ENCODE measurements at regions of chr3 and their contacts with region 1.

Region 1: GRCh38 chr3:32781210-32781968 is 36.4 kb upstream of the TRIM71 start:
- DNase-seq: peak; percentile 91
- ATAC-seq: peak; percentile 90
- H3K4me3 ChIP-seq: peak overlapping the region; percentile 75
- H3K27ac ChIP-seq: peak overlapping the region; percentile 35
- H3K4me1 ChIP-seq: peaks cover 5% of the 10 kb centered on the region
- H3K27me3 ChIP-seq: no peaks in the 10 kb centered on the region
- CTCF ChIP-seq: peak; percentile 83

Region 2: GRCh38 chr3:32733631-32734229 is 47.7 kb before region 1 on chr3:
- CTCF ChIA-PET with region 1: no interaction called
- POLR2A ChIA-PET with region 1: no interaction called
- intact Hi-C with region 1: loop called (anchors 1 kb)
- DNase-seq: peak; percentile 62
- ATAC-seq: peak; percentile 73
- H3K4me3 ChIP-seq: no peak overlapping the region
- H3K27ac ChIP-seq: no peak overlapping the region
- H3K4me1 ChIP-seq: no peaks in the 10 kb centered on the region
- H3K27me3 ChIP-seq: no peaks in the 10 kb centered on the region
- CTCF ChIP-seq: peak; percentile 81

Region 3: DNA sequence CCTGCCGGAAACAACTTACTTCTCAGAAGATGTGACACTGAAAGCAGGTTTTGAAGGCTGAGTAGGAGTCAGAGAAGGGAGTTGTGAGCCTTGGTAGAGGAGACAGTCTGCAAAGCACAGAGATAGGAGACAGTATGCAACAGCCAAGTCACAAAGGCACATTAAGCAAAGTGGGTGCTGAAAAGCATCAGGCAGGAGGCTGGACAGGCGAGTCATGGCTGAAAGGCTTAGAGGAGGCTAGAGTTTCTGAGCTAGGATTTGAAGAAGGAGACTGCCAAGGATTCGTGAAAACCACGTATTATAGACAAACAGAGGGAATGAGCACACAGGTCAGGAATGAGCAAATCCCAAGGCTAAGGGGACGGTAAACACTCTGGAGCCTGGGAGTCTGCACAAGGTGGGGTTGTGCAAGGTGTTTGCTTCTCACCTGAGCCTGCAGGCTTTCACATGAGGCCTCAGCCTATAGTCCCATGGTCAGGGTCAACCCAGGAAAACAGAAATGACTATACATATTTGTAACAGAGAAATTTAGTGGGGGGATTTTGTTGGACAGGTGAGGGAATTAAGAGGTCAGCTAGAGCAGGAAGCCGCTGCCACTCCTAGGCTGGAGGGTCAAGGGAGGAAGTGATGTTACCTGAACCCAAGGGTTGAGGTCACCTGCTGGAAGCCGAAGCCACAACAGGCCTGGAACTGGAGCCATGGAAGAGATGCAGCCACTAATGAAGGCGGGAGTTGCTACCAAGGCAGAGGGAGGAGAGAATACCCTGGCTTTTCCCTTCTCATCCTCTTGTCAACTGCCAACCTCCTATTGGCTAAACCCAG is 13.3 kb after region 1 on chr3:
- CTCF ChIA-PET with region 1: no interaction called
- POLR2A ChIA-PET with region 1: no interaction called
- intact Hi-C with region 1: loop called (anchors 1 kb)
- DNase-seq: peak; percentile 84
- ATAC-seq: peak; percentile 89
- H3K4me3 ChIP-seq: no peak overlapping the region
- H3K27ac ChIP-seq: peak overlapping the region; percentile 59
- H3K4me1 ChIP-seq: peaks cover 24% of the 10 kb centered on the region
- H3K27me3 ChIP-seq: no peaks in the 10 kb centered on the region
- CTCF ChIP-seq: no peak

Region 4: GRCh38 chr3:32842531-32842931 is 61.1 kb after region 1 on chr3:
- CTCF ChIA-PET with region 1: interaction called, 3 read pairs
- POLR2A ChIA-PET with region 1: no interaction called
- intact Hi-C with region 1: loop called (anchors 1 kb)
- DNase-seq: peak; percentile 11
- ATAC-seq: peak; percentile 31
- H3K4me3 ChIP-seq: no peak overlapping the region
- H3K27ac ChIP-seq: peak overlapping the region; percentile 91
- H3K4me1 ChIP-seq: peaks cover 27% of the 10 kb centered on the region
- H3K27me3 ChIP-seq: no peaks in the 10 kb centered on the region
- CTCF ChIP-seq: no peak

Region 5: GRCh38 chr3:32872487-32873382 is 91.3 kb after region 1 on chr3:
- CTCF ChIA-PET with region 1: no interaction called
- POLR2A ChIA-PET with region 1: no interaction called
- intact Hi-C with region 1: loop called (anchors 1 kb)
- DNase-seq: peak; percentile 60
- ATAC-seq: peak; percentile 52
- H3K4me3 ChIP-seq: no peak overlapping the region
- H3K27ac ChIP-seq: no peak overlapping the region
- H3K4me1 ChIP-seq: peaks cover 33% of the 10 kb centered on the region
- H3K27me3 ChIP-seq: no peaks in the 10 kb centered on the region
- CTCF ChIP-seq: no peak

Region 6: DNA sequence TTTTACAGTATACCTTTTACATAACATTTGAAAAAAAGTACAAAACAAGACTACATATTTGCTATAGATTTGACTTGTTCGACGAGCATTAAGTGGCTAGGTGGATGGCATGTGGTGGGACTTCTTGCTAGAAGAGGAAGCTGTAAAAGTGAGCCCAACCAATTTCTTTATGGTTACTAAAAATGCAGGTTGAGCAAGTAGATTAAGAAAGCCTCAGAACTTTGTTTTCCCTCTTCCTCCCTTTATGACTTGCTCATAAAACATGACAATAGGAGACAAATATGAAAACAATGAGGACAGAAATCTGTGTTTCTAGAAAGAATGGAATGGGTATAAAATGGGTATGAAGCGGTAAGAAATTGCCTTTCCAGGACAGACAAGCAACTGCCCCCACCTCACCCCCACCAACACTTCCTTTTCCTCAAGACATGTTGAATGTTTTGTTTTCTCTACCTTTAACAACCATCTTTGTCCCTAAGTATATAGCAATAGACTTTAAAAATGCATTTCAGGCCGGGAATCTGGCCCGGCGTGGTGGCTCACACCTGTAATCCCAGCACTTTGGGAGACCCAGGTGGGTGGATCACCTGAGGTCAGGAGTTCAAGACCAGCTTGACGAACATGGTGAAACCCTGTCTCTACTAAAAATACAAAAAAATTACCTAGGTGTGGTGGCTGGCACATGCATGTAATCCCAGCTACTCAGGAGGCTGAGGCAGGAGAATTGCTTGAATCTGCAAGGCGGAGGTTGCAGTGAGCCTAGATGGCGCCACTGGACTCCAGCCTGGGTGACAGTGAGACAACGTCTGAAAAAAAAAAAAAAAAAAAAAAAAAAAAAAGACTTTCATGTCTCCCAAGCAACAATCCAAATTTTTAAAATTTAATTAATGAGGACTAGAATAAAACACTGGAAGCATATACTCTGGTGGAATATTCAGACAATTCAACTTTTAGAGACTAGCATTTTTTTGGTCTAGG is 120.3 kb after region 1 on chr3:
- CTCF ChIA-PET with region 1: interaction called, 11 read pairs
- POLR2A ChIA-PET with region 1: no interaction called
- intact Hi-C with region 1: loop called (anchors 1 kb)
- DNase-seq: peak; percentile 58
- ATAC-seq: peak; percentile 52
- H3K4me3 ChIP-seq: peak overlapping the region; percentile 57
- H3K27ac ChIP-seq: no peak overlapping the region
- H3K4me1 ChIP-seq: peaks cover 9% of the 10 kb centered on the region; the same call in 1 of the 2 replicates
- H3K27me3 ChIP-seq: no peaks in the 10 kb centered on the region
- CTCF ChIP-seq: peak; percentile 64

Region 7: GRCh38 chr3:32934150-32934742 is 152.9 kb after region 1 on chr3:
- CTCF ChIA-PET with region 1: interaction called, 6 read pairs
- POLR2A ChIA-PET with region 1: no interaction called
- intact Hi-C with region 1: loop called (anchors 2 kb)
- DNase-seq: peak; percentile 63
- ATAC-seq: no peak
- H3K4me3 ChIP-seq: no peak overlapping the region
- H3K27ac ChIP-seq: no peak overlapping the region
- H3K4me1 ChIP-seq: peaks cover 4% of the 10 kb centered on the region; the same call in 1 of the 2 replicates
- H3K27me3 ChIP-seq: no peaks in the 10 kb centered on the region
- CTCF ChIP-seq: peak; percentile 88

Measured in PC-3 (cell line).